OCI-LY7 (cell line): ENCODE measurements at regions of chr16 and their contacts with region 1.

Region 1: DNA sequence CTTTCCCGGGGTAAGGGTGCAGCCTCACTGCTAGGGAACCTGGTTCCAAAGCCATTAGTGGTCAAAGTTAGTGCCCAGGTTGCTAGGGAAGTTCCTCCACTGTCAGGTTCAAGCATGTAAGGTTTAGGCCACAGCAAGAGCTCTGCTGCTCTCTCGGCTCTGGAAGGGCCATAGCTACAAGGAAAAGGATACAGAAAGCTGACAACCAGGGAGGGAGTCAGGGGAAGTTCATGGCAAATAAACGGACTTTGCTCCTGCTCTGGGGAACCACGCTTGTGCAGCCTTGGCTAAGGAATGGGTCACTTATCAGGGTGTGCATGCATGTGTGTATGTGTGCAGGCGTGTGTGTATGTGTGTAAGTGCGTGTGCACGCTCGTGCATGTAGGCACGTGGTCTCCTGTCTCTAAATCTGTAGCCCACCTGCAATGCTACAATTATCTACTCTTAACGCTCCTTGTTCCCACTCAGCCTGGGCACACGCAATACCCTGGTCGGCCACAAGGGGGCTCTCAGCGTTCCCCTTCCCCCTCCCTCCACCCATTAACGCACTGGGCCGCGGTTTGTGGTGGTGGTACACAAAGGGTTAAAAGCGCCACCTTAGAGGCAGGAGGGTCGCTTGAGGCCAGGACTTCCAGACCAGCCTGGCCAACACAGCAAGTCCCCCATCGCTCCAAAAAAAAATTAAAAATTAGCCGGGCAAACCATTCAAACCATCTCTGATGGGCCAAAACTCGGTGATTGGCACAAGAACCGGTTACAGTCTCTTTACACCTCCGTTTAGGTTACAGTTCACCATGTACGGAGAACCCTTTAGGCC is 48.4 kb upstream of the KDM8 start:
- DNase-seq: peak; percentile 68
- H3K4me3 ChIP-seq: no peak overlapping the region
- H3K27ac ChIP-seq: no peak overlapping the region
- H3K4me1 ChIP-seq: peaks cover 12% of the 10 kb centered on the region
- CTCF ChIP-seq: peak; percentile 98

Region 2: GRCh38 chr16:27461483-27462171 is 306.7 kb after region 1 on chr16:
- CTCF ChIA-PET with region 1: no interaction called
- POLR2A ChIA-PET with region 1: no interaction called
- intact Hi-C with region 1: loop called (anchors 1 kb)
- DNase-seq: no peak
- H3K4me3 ChIP-seq: no peak overlapping the region
- H3K27ac ChIP-seq: no peak overlapping the region
- H3K4me1 ChIP-seq: no peaks in the 10 kb centered on the region
- CTCF ChIP-seq: no peak